GM12878 (cell line): ENCODE measurements at regions of chr12 and their contacts with region 1.

Region 1: DNA sequence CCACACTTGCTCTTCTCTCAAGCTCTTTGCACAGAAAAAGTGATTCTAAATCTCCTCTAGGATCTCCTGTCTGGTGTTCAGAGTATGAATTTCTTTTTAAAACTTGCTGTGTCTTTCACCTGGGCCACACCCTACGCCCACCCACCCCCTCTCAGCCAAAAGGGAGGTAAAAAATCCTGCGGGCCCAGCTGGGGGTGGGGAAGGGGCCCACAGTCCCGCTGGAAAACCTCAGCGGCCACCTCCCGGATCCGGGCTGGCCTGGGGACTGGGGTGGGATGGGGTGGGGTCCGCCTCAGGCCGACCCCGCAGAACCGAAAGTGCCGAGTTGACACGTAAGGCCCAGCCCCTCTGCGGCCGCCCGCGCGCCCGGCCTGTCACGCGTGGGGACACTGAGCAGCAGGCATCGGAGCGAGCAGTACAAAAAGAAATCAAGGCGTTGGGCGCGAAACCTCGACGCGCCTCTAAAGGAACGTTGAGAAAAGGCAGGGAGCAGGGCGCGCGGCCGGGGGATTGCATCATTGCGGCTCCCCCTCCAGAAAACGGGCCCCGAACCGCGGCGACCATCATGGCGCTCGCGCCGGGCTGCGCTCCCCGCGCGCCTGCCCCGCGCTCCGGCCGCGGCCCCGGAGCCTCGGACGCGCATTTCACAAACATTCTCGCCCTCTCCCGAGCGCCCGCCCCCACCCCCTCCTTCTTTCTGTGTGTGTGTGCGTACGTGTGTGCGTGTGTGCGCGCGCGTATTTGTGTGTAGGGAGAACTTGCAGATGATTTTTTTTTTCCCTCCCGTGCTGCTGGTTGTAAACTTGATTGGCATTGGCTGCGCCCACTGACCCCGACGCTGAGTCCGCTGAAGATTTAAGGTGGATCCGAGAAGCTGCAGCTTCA is 7.7 kb downstream of the CDKN1B start:
- DNase-seq: peak; percentile 94
- ATAC-seq: peak; percentile 55
- H3K4me3 ChIP-seq: peak overlapping the region; percentile 97
- H3K27ac ChIP-seq: peak overlapping the region; percentile 97
- H3K4me1 ChIP-seq: peaks cover 14% of the 10 kb centered on the region
- H3K27me3 ChIP-seq: no peaks in the 10 kb centered on the region
- CTCF ChIP-seq: no peak
- EP300 ChIP-seq: no peak
- POLR2A ChIP-seq: peak; percentile 76
- RAD21 ChIP-seq: no peak

Region 2: DNA sequence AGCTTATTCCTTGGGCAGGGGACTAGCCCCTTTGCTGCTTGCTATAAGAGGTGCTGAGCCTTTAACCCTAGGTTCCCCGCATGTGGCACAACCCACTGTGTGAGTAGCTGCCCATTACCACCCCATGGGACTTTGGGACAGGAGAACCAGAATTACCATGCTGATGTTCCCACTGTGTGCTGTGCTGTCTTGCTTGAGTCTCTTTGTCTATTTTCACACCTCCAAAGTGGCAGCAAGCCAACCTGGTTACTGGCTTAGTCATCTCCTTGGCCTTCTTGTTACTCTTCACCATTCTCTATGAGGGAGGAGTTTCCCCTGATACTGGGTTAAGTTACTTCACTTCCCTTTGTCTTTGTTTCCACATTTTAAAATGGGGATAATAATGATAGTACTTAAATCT is 1148.8 kb before region 1 on chr12:
- CTCF ChIA-PET with region 1: no interaction called
- POLR2A ChIA-PET with region 1: no interaction called
- RAD21 ChIA-PET with region 1: no interaction called
- SMC1A ChIA-PET with region 1: no interaction called
- in situ Hi-C with region 1: no loop called
- intact Hi-C with region 1: loop called (anchors 5 kb)
- DNase-seq: peak; percentile 86
- ATAC-seq: peak; percentile 53
- H3K4me3 ChIP-seq: no peak overlapping the region
- H3K27ac ChIP-seq: peak overlapping the region; percentile 89
- H3K4me1 ChIP-seq: peaks cover 43% of the 10 kb centered on the region
- H3K27me3 ChIP-seq: no peaks in the 10 kb centered on the region
- CTCF ChIP-seq: no peak
- EP300 ChIP-seq: no peak
- POLR2A ChIP-seq: no peak
- RAD21 ChIP-seq: no peak

Region 3: DNA sequence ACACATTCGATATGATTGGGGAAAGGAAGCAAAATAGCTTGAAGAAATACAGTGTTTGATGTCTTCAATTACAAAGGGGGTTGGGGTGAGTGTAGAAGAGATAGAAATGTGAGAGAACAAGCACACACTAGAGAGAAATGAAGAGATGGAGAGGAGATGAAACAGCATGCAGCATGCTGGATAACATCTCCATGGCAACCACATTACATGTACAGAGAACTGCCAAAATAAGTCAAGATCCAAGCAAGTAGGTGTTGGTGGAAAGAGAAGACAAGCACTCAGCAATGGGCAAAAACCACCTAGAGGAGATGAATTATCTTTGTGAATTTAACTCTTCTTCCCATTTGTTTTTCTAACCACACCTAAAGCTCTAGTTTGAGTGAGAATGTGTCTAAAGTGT is 966.7 kb after region 1 on chr12:
- CTCF ChIA-PET with region 1: no interaction called
- POLR2A ChIA-PET with region 1: no interaction called
- RAD21 ChIA-PET with region 1: no interaction called
- SMC1A ChIA-PET with region 1: no interaction called
- in situ Hi-C with region 1: no loop called
- intact Hi-C with region 1: no loop called
- DNase-seq: no peak
- ATAC-seq: no peak
- H3K4me3 ChIP-seq: no peak overlapping the region
- H3K27ac ChIP-seq: no peak overlapping the region
- H3K4me1 ChIP-seq: no peaks in the 10 kb centered on the region
- H3K27me3 ChIP-seq: no peaks in the 10 kb centered on the region
- CTCF ChIP-seq: no peak
- EP300 ChIP-seq: no peak
- POLR2A ChIP-seq: no peak
- RAD21 ChIP-seq: no peak

Region 4: GRCh38 chr12:14394317-14395073 is 1669.6 kb after region 1 on chr12:
- CTCF ChIA-PET with region 1: no interaction called
- POLR2A ChIA-PET with region 1: no interaction called
- RAD21 ChIA-PET with region 1: no interaction called
- SMC1A ChIA-PET with region 1: no interaction called
- in situ Hi-C with region 1: no loop called
- intact Hi-C with region 1: loop called (anchors 10 kb)
- DNase-seq: peak; percentile 65
- ATAC-seq: peak; percentile 77
- H3K4me3 ChIP-seq: 0 out of 2 replicates have a peak overlapping the region, but pooled peaks have one; percentile 18
- H3K27ac ChIP-seq: peak overlapping the region; percentile 82
- H3K4me1 ChIP-seq: peaks cover 11% of the 10 kb centered on the region; the same call in 1 of the 2 replicates
- H3K27me3 ChIP-seq: no peaks in the 10 kb centered on the region
- CTCF ChIP-seq: no peak; a peak in 1 of 6 replicates
- EP300 ChIP-seq: no peak
- POLR2A ChIP-seq: 0 out of 2 replicates have a peak, but pooled peaks have one; percentile 22
- RAD21 ChIP-seq: no peak